GM12878 (cell line): ENCODE measurements at regions of chr22 and their contacts with region 1.

Region 1: DNA sequence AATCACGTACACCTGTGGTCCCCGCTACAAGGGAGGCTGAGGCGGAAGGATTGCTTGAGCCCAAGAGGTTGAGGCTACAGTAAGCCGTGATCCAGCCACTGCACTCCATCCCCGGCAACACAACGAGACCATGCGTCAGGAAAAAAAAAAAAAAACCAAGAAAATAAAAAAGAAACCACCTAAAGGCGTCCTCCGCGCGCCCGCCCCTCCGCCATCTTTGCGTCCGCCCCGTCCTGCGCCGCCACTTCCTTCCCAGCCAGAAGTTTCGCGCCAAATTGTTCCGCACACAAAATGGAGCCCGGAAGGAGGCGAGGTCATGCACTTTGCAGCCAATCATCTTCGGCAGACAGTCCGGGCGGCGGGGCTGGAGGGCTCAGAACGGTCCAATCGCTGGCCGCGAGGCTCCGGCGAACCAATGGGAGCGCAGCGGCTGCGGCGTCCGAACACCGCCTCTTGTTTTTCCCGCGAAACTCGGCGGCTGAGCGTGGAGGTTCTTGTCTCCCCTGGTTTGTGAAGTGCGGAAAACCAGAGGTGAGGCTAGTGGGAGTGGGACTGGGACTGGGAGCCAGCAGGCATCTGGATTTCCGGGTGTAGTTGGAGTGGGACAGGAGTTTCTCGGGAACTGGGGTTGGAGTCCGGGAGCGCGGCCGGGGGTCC is at the start of gene MCM5:
- DNase-seq: peak; percentile 94
- ATAC-seq: peak; percentile 96
- H3K4me3 ChIP-seq: peak within 1 kb of the TSS; percentile 91
- H3K27ac ChIP-seq: peak within 1 kb of the TSS; percentile 90
- H3K4me1 ChIP-seq: peaks cover 32% of the 10 kb centered on the region
- H3K27me3 ChIP-seq: no peaks in the 10 kb centered on the region
- CTCF ChIP-seq: no peak
- EP300 ChIP-seq: no peak
- POLR2A ChIP-seq: peak; percentile 81
- RAD21 ChIP-seq: no peak
- polyA plus RNA-seq, gene MCM5: 14.1 to 22.1 TPM

Region 2: GRCh38 chr22:35128637-35129036 is 271.2 kb before region 1 on chr22:
- CTCF ChIA-PET with region 1: interaction called, 3 read pairs
- POLR2A ChIA-PET with region 1: no interaction called
- RAD21 ChIA-PET with region 1: no interaction called
- SMC1A ChIA-PET with region 1: no interaction called
- in situ Hi-C with region 1: loop called (anchors 10 kb)
- intact Hi-C with region 1: no loop called
- DNase-seq: peak; percentile 95
- ATAC-seq: peak; percentile 78
- H3K4me3 ChIP-seq: no peak overlapping the region
- H3K27ac ChIP-seq: peak overlapping the region; percentile 99
- H3K4me1 ChIP-seq: peaks cover 80% of the 10 kb centered on the region
- H3K27me3 ChIP-seq: no peaks in the 10 kb centered on the region
- CTCF ChIP-seq: no peak
- EP300 ChIP-seq: peak; percentile 81 to 95
- POLR2A ChIP-seq: no peak
- RAD21 ChIP-seq: peak; percentile 13; the same call in 1 of the 2 replicates

Region 3: DNA sequence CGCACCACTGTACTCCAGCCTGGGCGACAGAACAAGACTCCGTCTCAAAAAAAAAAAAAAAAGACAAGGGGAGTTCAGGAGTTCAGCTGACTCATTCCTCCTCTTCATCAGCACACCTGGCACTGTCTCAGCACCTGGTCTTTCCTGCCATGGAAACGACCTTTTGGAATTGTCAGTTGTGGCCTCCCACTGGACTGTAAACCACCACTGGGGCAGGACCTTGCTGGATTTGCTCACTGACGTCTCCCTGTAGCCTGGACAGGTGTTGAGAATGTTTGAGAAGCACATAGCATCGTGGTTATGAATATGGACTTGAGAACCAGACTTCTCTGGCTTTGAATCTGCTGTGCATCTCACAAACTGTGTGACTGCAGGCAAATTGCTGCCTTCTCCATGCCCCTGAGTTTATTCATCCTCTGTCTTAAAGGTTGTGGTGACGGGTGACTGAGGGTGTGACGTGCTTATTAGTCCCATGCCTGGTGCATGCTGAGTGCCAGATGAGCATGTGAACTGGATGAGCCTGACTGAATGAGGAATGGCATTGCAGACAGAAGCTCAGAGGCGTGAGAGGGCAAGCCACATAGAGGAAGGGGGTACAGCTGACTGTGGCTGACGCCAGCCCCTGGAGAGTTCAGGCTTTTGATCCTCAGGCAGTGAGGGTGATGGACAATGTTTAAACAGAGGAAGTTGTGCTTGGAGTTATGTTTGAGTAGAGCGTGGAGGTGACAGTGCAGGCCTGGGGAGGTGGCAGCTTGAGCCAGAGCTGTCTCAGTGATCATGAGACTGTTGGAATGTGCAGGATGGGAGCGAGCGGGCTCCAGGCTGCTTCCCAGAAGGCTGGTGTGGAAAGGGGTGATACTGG is 87.4 kb before region 1 on chr22:
- CTCF ChIA-PET with region 1: no interaction called
- POLR2A ChIA-PET with region 1: no interaction called
- RAD21 ChIA-PET with region 1: interaction called, 6 read pairs
- SMC1A ChIA-PET with region 1: no interaction called
- in situ Hi-C with region 1: no loop called
- intact Hi-C with region 1: loop called (anchors 5 kb)
- DNase-seq: no peak
- ATAC-seq: no peak
- H3K4me3 ChIP-seq: no peak overlapping the region
- H3K27ac ChIP-seq: peak overlapping the region; percentile 72
- H3K4me1 ChIP-seq: peaks cover 61% of the 10 kb centered on the region
- H3K27me3 ChIP-seq: no peaks in the 10 kb centered on the region
- CTCF ChIP-seq: no peak
- EP300 ChIP-seq: no peak
- POLR2A ChIP-seq: no peak
- RAD21 ChIP-seq: no peak

Region 4: DNA sequence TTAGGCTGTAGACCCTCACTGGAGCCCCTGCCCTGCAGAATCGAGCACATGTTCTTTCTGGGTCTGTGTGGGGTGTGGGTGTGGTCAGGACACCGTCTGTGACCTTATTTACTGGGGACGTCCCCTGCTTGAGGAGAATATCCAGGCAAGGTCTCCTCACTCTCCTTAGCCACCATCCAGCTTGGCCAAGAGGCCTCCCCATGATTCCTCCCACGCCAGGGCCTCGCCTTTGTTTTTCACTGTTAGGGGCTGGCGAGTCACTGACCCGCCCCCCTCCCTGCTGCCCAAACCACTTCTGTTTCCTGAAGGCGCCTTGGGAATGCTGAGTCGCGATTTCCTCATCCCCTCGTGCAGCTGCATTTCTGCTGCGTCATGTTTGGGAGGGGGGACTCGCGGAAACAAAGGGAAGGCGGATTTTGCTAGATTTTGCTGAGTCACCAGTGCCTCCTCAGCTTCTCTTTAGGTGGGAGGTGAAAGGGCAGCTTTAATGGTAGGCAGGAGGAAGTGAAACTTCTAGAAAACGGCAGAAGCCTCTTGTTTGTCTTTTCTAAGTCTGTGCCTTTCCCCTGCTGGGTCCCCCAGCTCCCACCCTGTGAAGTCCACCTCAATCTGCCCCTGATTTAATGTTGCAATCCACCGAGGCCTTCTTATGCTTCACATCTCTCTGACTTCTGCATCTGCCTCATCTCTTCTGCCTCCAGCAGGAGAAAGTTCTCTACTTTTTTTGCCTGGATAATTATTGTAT is 22.9 kb before region 1 on chr22:
- CTCF ChIA-PET with region 1: interaction called, 3 read pairs
- POLR2A ChIA-PET with region 1: interaction called, 14 read pairs
- RAD21 ChIA-PET with region 1: interaction called, 5 read pairs
- SMC1A ChIA-PET with region 1: interaction called, 26 read pairs
- in situ Hi-C with region 1: no loop called
- intact Hi-C with region 1: no loop called
- DNase-seq: peak; percentile 87
- ATAC-seq: peak; percentile 74
- H3K4me3 ChIP-seq: no peak overlapping the region; the same call in 1 of the 2 replicates
- H3K27ac ChIP-seq: peak overlapping the region; percentile 81
- H3K4me1 ChIP-seq: peaks cover 37% of the 10 kb centered on the region
- H3K27me3 ChIP-seq: no peaks in the 10 kb centered on the region
- CTCF ChIP-seq: no peak
- EP300 ChIP-seq: peak; percentile 85 to 88
- POLR2A ChIP-seq: no peak
- RAD21 ChIP-seq: 0 out of 2 replicates have a peak, but pooled peaks have one; percentile 0

Region 5: DNA sequence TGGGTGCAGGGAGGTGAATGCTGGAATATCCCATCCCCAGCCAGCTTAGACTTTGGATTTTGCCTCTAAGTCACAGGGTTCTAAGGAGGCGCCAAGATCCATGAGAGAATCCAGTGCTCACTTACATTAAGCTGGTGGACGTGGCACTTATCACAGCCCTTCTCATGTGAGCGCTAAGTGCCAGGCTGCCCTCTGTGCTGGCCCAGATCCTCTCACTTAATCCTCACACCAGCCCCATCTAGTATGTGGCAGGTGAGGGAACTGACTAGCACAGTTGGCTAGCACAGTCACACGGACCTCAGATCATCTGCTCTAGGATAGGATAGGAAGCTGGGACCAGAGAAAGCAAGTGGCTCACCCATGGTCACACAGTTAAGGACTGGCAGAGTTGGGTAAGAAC is 15.3 kb before region 1 on chr22:
- CTCF ChIA-PET with region 1: interaction called, 13 read pairs
- POLR2A ChIA-PET with region 1: interaction called, 12 read pairs
- RAD21 ChIA-PET with region 1: interaction called, 5 read pairs
- SMC1A ChIA-PET with region 1: interaction called, 26 read pairs
- in situ Hi-C with region 1: no loop called
- intact Hi-C with region 1: no loop called
- DNase-seq: no peak
- ATAC-seq: peak; percentile 33
- H3K4me3 ChIP-seq: no peak overlapping the region
- H3K27ac ChIP-seq: no peak overlapping the region
- H3K4me1 ChIP-seq: peaks cover 8% of the 10 kb centered on the region; the same call in 1 of the 2 replicates
- H3K27me3 ChIP-seq: no peaks in the 10 kb centered on the region
- CTCF ChIP-seq: no peak
- EP300 ChIP-seq: no peak
- POLR2A ChIP-seq: no peak
- RAD21 ChIP-seq: no peak

Region 6: GRCh38 chr22:36506637-36507517 is 1107.1 kb after region 1 on chr22 and contains the start of gene FOXRED2:
- CTCF ChIA-PET with region 1: no interaction called
- POLR2A ChIA-PET with region 1: no interaction called
- RAD21 ChIA-PET with region 1: no interaction called
- SMC1A ChIA-PET with region 1: no interaction called
- in situ Hi-C with region 1: loop called (anchors 25 kb)
- intact Hi-C with region 1: no loop called
- DNase-seq: no peak
- ATAC-seq: peak; percentile 96
- H3K4me3 ChIP-seq: peak within 1 kb of the TSS; percentile 59; the same call in 1 of the 2 replicates
- H3K27ac ChIP-seq: no peak within 1 kb of the TSS; the same call in 1 of the 2 replicates
- H3K4me1 ChIP-seq: peaks cover 9% of the 10 kb centered on the region
- H3K27me3 ChIP-seq: no peaks in the 10 kb centered on the region; a peak in 1 of 4 replicates
- CTCF ChIP-seq: no peak
- EP300 ChIP-seq: no peak
- POLR2A ChIP-seq: peak; percentile 96
- RAD21 ChIP-seq: no peak
- polyA plus RNA-seq, gene FOXRED2: 3.5 to 3.9 TPM

Region 7: DNA sequence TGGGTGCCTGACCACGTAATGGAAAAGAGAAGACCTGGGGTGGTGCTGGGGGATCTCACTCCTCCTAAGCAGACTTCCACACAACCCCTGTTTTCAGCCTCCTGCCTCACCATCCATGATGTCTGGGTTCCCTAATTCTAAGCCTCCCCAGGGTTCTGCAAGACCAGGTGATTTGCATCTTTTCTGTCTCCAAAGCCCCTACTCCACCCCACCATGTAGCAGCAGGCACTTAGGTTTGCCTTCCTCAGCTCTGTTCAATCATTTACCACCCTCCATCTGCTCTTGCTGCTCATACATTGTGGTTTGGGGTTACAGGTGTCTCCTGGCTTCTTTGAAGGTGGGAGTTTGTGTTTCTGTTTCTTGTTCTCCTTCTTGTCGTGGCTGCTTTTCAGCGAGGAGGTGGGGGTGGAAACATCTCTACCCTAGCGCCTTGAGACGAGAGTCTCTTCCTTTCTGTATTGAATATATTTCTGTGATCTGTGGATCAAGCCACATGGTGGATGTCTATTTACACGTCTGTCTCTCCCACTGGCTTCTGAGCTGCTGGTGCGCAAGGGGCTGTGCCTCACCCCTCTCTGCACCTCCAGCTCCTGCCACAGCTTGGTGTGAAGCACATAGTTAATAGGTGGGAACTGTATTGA is 1819.1 kb after region 1 on chr22:
- CTCF ChIA-PET with region 1: no interaction called
- POLR2A ChIA-PET with region 1: no interaction called
- RAD21 ChIA-PET with region 1: no interaction called
- SMC1A ChIA-PET with region 1: no interaction called
- in situ Hi-C with region 1: loop called (anchors 25 kb)
- intact Hi-C with region 1: no loop called
- DNase-seq: peak; percentile 99
- ATAC-seq: peak; percentile 82
- H3K4me3 ChIP-seq: peak overlapping the region; percentile 80
- H3K27ac ChIP-seq: peak overlapping the region; percentile 99
- H3K4me1 ChIP-seq: peaks cover 73% of the 10 kb centered on the region
- H3K27me3 ChIP-seq: no peaks in the 10 kb centered on the region
- CTCF ChIP-seq: no peak
- EP300 ChIP-seq: peak; percentile 85 to 89
- POLR2A ChIP-seq: peak; percentile 62; the same call in 1 of the 2 replicates
- RAD21 ChIP-seq: no peak